ENCODE measurements at regions of chr17 and their contacts with region 1.

Region 1: DNA sequence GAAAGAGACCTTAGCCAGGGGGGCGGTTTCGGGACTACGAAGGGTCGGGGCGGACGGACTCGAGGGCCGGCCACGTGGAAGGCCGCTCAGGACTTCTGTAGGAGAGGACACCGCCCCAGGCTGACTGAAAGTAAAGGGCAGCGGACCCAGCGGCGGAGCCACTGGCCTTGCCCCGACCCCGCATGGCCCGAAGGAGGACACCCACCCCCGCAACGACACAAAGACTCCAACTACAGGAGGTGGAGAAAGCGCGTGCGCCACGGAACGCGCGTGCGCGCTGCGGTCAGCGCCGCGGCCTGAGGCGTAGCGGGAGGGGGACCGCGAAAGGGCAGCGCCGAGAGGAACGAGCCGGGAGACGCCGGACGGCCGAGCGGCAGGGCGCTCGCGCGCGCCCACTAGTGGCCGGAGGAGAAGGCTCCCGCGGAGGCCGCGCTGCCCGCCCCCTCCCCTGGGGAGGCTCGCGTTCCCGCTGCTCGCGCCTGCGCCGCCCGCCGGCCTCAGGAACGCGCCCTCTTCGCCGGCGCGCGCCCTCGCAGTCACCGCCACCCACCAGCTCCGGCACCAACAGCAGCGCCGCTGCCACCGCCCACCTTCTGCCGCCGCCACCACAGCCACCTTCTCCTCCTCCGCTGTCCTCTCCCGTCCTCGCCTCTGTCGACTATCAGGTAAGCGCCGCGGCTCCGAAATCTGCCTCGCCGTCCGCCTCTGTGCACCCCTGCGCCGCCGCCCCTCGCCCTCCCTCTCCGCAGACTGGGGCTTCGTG is at the start of gene MAPT:
- DNase-seq: peak; percentile 87
- H3K4me3 ChIP-seq: peak within 1 kb of the TSS; percentile 54 to 70 (median 54)
- H3K27ac ChIP-seq: no peak within 1 kb of the TSS
- H3K4me1 ChIP-seq: peaks cover 10% of the 10 kb centered on the region
- H3K27me3 ChIP-seq: peaks cover 25% of the 10 kb centered on the region
- CTCF ChIP-seq: peak; percentile 71 to 74
- total RNA-seq, gene MAPT: under 0.01 to 0.54 TPM

Region 2: GRCh38 chr17:45775576-45776011 is 118.6 kb before region 1 on chr17:
- CTCF ChIA-PET with region 1: no interaction called
- dilution Hi-C with region 1: no loop called
- in situ Hi-C with region 1: no loop called
- intact Hi-C with region 1: no loop called
- DNase-seq: peak; percentile 9
- H3K4me3 ChIP-seq: no peak overlapping the region
- H3K27ac ChIP-seq: no peak overlapping the region
- H3K4me1 ChIP-seq: peaks cover 6% of the 10 kb centered on the region
- H3K27me3 ChIP-seq: peaks cover 3% of the 10 kb centered on the region
- CTCF ChIP-seq: no peak

Region 3: GRCh38 chr17:45948881-45949624 is 54.9 kb after region 1 on chr17:
- CTCF ChIA-PET with region 1: no interaction called
- dilution Hi-C with region 1: loop called (anchors 10 kb)
- in situ Hi-C with region 1: no loop called
- intact Hi-C with region 1: no loop called
- DNase-seq: peak; percentile 40
- H3K4me3 ChIP-seq: peak overlapping the region in 1 of 3 experiments; percentile 15
- H3K27ac ChIP-seq: no peak overlapping the region
- H3K4me1 ChIP-seq: no peaks in the 10 kb centered on the region
- H3K27me3 ChIP-seq: no peaks in the 10 kb centered on the region
- CTCF ChIP-seq: peak; percentile 47 to 77